Activated CD4-positive, alpha-beta memory T cell treated with anti-CD3 and anti-CD28 coated beads for 36 hours (primary cell): ENCODE measurements at regions of chr13 and their contacts with region 1.

Region 1: DNA sequence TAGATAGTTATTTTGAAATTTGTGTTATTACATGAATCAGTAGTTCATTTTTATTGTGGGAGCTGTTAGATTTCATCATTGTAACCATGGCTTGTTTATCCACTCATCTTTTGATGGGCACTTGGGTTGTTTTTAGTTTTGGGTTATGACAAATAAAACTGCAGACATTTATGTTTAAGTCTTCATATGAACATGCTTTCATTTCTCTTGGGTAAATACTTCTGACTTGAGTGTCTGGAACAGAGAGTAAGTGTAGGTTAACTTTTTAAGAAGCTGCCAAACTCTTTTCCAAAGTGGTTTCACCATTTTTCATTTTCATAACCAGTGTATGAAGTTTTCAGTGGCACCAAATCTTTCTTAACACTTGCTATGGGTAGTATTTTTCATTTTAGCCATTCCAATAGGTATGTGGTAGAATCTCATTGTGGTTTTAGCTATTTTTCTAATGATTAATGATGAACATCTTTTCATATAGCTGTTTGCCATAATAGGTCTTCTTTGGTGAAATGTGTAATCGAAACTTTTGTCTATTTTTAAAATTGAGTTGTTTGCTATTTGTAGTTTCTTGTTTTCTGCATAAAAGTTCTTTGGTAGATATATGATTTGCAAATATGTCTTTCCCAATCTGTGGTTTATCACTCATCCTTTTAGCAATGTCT is 17.9 kb downstream of the SLAIN1 start:
- DNase-seq: no peak
- H3K4me3 Mint-ChIP-seq: no peak overlapping the region
- H3K27ac Mint-ChIP-seq: peak overlapping the region; percentile 53
- H3K4me1 Mint-ChIP-seq: peaks cover 42% of the 10 kb centered on the region
- H3K27me3 Mint-ChIP-seq: no peaks in the 10 kb centered on the region

Region 2: DNA sequence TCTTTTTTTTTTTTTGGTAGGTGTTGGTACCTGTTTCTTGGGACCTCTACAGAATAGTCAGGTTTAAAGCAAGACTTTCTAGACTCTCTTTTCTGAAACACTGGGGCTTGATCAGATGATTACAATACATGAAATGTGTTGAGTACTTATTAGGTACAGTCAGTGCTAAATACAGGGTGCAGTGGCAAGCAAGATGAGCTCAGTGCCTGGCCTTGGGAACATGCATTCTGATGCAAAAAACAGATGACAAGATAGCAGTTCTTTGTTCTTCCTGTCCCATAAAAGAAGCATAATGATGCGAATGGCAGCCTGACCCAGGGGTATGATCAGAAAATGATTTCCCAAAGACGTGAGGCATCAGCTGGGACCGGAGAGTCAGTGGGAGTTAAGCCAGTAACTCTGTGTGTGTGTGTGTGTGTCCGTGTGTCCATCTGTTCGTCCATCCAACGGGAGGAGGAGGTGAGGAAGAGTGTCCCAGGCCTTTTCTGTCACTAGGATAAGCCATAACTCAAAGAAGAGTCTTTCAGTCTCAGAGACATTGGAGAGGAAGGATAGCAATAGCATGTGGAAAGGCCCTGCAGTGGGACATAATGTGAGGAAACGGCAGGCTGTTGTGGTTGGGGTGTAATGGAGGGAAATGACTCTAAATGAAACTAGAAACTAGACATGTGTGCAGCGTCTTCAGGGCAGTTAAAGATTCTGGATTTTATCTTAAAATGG is 14.3 kb after region 1 on chr13:
- CTCF ChIA-PET with region 1: no interaction called
- POLR2A ChIA-PET with region 1: no interaction called
- intact Hi-C with region 1: loop called (anchors 1 kb)
- DNase-seq: peak; percentile 66
- H3K4me3 Mint-ChIP-seq: peak overlapping the region; percentile 32
- H3K27ac Mint-ChIP-seq: peak overlapping the region; percentile 70
- H3K4me1 Mint-ChIP-seq: peaks cover 39% of the 10 kb centered on the region
- H3K27me3 Mint-ChIP-seq: no peaks in the 10 kb centered on the region

Region 3: GRCh38 chr13:77737583-77738200 is 22.3 kb after region 1 on chr13:
- CTCF ChIA-PET with region 1: no interaction called
- POLR2A ChIA-PET with region 1: interaction called, 10 read pairs
- intact Hi-C with region 1: loop called (anchors 1 kb)
- DNase-seq: peak; percentile 54
- H3K4me3 Mint-ChIP-seq: no peak overlapping the region
- H3K27ac Mint-ChIP-seq: no peak overlapping the region
- H3K4me1 Mint-ChIP-seq: peaks cover 17% of the 10 kb centered on the region
- H3K27me3 Mint-ChIP-seq: no peaks in the 10 kb centered on the region

Region 4: GRCh38 chr13:77832339-77833100 is 117.2 kb after region 1 on chr13:
- CTCF ChIA-PET with region 1: no interaction called
- POLR2A ChIA-PET with region 1: no interaction called
- intact Hi-C with region 1: no loop called
- DNase-seq: no peak
- H3K4me3 Mint-ChIP-seq: no peak overlapping the region
- H3K27ac Mint-ChIP-seq: no peak overlapping the region
- H3K4me1 Mint-ChIP-seq: no peaks in the 10 kb centered on the region
- H3K27me3 Mint-ChIP-seq: no peaks in the 10 kb centered on the region